B cell (primary cell): ENCODE measurements at regions of chr9 and their contacts with region 1.

Region 1: GRCh38 chr9:21110708-21111576 is 30.7 kb downstream of the IFNW1 start:
- DNase-seq: peak; percentile 74
- ATAC-seq: peak; percentile 47
- H3K4me3 ChIP-seq: no peak overlapping the region
- H3K4me3 Mint-ChIP-seq: no peak overlapping the region
- H3K27ac ChIP-seq: no peak overlapping the region
- H3K27ac Mint-ChIP-seq: no peak overlapping the region
- H3K4me1 ChIP-seq: no peaks in the 10 kb centered on the region
- H3K4me1 Mint-ChIP-seq: no peaks in the 10 kb centered on the region
- H3K27me3 ChIP-seq: no peaks in the 10 kb centered on the region
- H3K27me3 Mint-ChIP-seq: peaks cover 3% of the 10 kb centered on the region
- CTCF ChIP-seq: peak; percentile 93

Region 2: DNA sequence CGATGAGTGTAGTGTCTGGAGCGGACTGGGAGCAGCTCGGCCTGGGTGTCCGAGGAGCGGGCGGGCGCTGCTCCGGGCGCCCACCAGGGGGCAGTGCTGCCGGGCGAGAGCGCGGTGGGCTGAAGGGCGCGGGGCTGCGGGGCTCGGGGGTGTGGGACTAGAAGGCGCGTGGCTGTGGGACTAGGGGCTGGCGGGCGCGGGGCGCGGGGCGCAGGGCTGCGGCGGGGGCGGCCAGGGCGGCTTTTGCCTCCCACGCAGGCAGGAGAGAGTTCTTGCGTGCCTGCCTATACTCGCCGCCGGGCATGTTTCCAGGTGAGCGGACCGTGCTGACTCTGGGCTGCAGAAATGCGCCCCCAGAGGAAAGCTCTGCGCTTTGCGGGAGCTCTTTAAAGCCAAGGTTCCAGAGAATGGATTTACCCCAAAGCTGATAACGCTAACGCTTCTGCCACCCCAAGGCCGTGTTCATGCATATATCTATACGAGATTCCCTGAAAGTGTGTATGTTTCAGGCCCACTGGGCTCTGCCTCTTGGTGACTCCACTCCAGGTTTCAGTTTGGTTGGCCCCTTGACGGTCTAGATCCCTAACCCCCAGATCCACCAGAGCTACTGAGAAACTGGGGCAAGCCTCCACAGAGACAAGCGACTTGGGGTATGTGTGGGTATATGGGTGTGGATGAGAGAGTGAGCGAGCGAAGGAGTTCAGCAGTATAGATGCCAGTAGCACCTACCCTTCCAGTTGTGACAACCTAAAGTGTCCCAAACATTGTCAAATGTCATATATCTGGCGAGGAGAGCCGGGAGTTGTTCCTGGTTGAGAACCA is 1646.0 kb before region 1 on chr9:
- CTCF ChIA-PET with region 1: interaction called, 15 read pairs
- POLR2A ChIA-PET with region 1: no interaction called
- intact Hi-C with region 1: loop called (anchors 2 kb)
- DNase-seq: peak; percentile 83
- ATAC-seq: peak; percentile 92
- H3K4me3 ChIP-seq: peak overlapping the region in 3 of 5 experiments; percentile 43 to 75 (median 56)
- H3K4me3 Mint-ChIP-seq: peak overlapping the region; percentile 92
- H3K27ac ChIP-seq: no peak overlapping the region
- H3K27ac Mint-ChIP-seq: peak overlapping the region; percentile 62
- H3K4me1 ChIP-seq: peaks cover 4 to 9% of the 10 kb centered on the region in 2 donors
- H3K4me1 Mint-ChIP-seq: peaks cover 14% of the 10 kb centered on the region
- H3K27me3 ChIP-seq: no peaks in the 10 kb centered on the region
- H3K27me3 Mint-ChIP-seq: no peaks in the 10 kb centered on the region
- CTCF ChIP-seq: peak; percentile 90

Region 3: DNA sequence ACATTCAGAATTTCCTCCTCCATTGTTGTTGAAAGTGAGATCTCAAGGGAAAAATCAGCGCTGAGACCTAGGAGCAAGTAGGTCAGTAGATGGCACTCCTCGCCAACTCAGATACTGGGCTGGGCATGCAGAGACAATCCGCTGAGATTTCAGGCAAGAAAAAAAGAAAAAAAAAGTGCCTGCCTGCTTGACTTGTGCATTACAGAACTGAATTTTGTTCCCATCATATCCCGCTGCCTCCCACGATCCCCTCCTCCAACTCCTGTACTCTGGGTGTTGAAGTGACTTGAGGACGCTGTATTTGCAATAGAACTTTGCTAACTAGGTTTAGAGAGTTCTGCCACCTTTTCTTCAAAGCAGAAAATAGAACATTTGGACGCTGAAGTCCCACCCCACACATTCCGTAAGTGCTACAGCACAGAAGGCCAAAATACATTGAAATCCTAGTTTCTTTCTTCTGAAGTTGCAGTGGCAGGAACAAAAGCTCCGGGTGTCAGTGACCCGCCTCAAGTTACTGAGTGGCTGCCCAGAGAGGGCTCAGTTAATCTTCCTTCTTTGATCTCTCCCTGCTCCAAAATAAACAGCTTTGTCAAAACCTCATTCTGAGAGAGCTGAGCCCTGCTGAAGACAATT is 754.4 kb before region 1 on chr9:
- CTCF ChIA-PET with region 1: interaction called, 9 read pairs
- POLR2A ChIA-PET with region 1: no interaction called
- intact Hi-C with region 1: loop called (anchors 10 kb)
- DNase-seq: peak; percentile 31
- ATAC-seq: no peak
- H3K4me3 ChIP-seq: no peak overlapping the region
- H3K4me3 Mint-ChIP-seq: no peak overlapping the region
- H3K27ac ChIP-seq: no peak overlapping the region
- H3K27ac Mint-ChIP-seq: no peak overlapping the region
- H3K4me1 ChIP-seq: no peaks in the 10 kb centered on the region
- H3K4me1 Mint-ChIP-seq: no peaks in the 10 kb centered on the region
- H3K27me3 ChIP-seq: no peaks in the 10 kb centered on the region
- H3K27me3 Mint-ChIP-seq: no peaks in the 10 kb centered on the region
- CTCF ChIP-seq: peak; percentile 19

Region 4: DNA sequence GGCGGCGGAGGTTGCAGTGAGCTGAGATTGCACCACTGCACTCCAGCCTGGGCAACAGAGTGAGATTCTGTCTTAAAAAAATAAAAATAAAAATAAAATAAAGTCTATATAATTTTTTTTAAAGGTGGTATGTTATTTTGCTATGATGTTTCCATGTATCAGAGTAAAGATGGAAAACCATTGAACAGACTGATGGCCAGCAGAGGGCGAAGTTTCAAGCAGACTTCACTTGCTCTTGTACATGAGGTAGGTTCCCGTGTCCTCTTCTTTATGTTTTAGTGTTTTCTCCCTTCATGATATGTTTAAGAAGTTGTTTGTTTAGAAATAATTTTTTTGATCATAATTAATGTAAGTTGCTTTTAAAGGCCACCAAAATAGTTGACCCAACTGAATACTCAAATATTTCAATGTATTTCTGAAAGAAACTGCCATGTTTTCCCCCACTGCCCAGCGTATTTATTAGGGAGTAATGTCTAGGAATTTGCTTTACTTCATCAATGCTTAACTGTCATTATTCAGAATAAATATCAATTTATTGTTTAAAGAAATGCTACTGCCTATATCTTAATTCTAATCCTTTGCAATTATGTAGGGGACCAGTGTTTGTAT is 225.9 kb before region 1 on chr9:
- CTCF ChIA-PET with region 1: interaction called, 80 read pairs
- POLR2A ChIA-PET with region 1: no interaction called
- intact Hi-C with region 1: loop called (anchors 1 kb)
- DNase-seq: peak; percentile 45
- ATAC-seq: no peak
- H3K4me3 ChIP-seq: no peak overlapping the region
- H3K4me3 Mint-ChIP-seq: no peak overlapping the region
- H3K27ac ChIP-seq: no peak overlapping the region
- H3K27ac Mint-ChIP-seq: no peak overlapping the region
- H3K4me1 ChIP-seq: no peaks in the 10 kb centered on the region
- H3K4me1 Mint-ChIP-seq: no peaks in the 10 kb centered on the region
- H3K27me3 ChIP-seq: no peaks in the 10 kb centered on the region
- H3K27me3 Mint-ChIP-seq: no peaks in the 10 kb centered on the region
- CTCF ChIP-seq: peak; percentile 75

Region 5: GRCh38 chr9:21078717-21079116 is 32.2 kb before region 1 on chr9:
- CTCF ChIA-PET with region 1: interaction called, 11 read pairs
- POLR2A ChIA-PET with region 1: no interaction called
- intact Hi-C with region 1: no loop called
- DNase-seq: no peak
- ATAC-seq: no peak
- H3K4me3 ChIP-seq: no peak overlapping the region
- H3K4me3 Mint-ChIP-seq: no peak overlapping the region
- H3K27ac ChIP-seq: no peak overlapping the region
- H3K27ac Mint-ChIP-seq: no peak overlapping the region
- H3K4me1 ChIP-seq: peaks cover 0 to 3% of the 10 kb centered on the region in 2 donors
- H3K4me1 Mint-ChIP-seq: peaks cover 1% of the 10 kb centered on the region
- H3K27me3 ChIP-seq: peaks cover 0 to 2% (median 0%) of the 10 kb centered on the region in 4 experiments
- H3K27me3 Mint-ChIP-seq: peaks cover 10% of the 10 kb centered on the region
- CTCF ChIP-seq: no peak